ENCODE measurements at regions of chr1 and their contacts with region 1.

Region 1: DNA sequence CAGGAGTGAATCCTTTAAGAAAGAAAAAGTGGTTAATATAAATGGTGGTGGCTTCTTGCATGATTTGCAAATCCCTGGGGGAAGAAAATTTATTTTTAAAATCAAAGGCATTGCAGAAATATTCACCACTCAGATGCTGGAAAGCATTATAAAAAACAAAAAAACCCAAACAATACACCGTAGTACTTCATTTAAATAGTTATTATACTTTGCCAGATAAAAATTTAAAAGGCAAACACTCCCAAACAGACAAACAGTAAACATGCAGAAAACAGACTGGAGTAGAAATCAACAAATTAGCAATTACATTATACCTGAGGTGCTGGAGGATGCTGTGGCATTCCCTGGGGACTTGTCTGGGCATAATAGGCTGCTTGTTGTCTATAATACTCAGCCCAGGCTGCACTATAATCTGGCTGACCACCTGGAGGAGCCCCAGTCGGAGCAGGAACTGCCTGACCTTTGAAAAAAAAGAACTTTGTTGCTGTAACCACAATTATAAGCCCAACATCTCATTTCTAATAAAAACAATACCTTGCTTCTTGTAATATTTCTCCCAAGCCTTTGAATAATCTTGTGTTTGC is 29.9 kb downstream of the FUBP1 start:
- DNase-seq: no peak
- H3K4me3 ChIP-seq: no peak overlapping the region
- H3K27ac ChIP-seq: no peak overlapping the region
- H3K4me1 ChIP-seq: no peaks in the 10 kb centered on the region
- H3K27me3 ChIP-seq: no peaks in the 10 kb centered on the region
- CTCF ChIP-seq: no peak

Region 2: GRCh38 chr1:77333501-77333900 is 615.4 kb before region 1 on chr1:
- CTCF ChIA-PET with region 1: no interaction called
- POLR2A ChIA-PET with region 1: no interaction called
- intact Hi-C with region 1: no loop called
- DNase-seq: no peak
- H3K4me3 ChIP-seq: no peak overlapping the region
- H3K27ac ChIP-seq: no peak overlapping the region
- H3K4me1 ChIP-seq: no peaks in the 10 kb centered on the region
- H3K27me3 ChIP-seq: no peaks in the 10 kb centered on the region
- CTCF ChIP-seq: no peak

Region 3: GRCh38 chr1:77900687-77901293 is 48.1 kb before region 1 on chr1:
- CTCF ChIA-PET with region 1: no interaction called
- POLR2A ChIA-PET with region 1: no interaction called
- intact Hi-C with region 1: no loop called
- DNase-seq: peak; percentile 19 to 60
- H3K4me3 ChIP-seq: no peak overlapping the region
- H3K27ac ChIP-seq: no peak overlapping the region
- H3K4me1 ChIP-seq: no peaks in the 10 kb centered on the region; the same call in 1 of the 2 replicates
- H3K27me3 ChIP-seq: no peaks in the 10 kb centered on the region
- CTCF ChIP-seq: peak; percentile 89

Region 4: DNA sequence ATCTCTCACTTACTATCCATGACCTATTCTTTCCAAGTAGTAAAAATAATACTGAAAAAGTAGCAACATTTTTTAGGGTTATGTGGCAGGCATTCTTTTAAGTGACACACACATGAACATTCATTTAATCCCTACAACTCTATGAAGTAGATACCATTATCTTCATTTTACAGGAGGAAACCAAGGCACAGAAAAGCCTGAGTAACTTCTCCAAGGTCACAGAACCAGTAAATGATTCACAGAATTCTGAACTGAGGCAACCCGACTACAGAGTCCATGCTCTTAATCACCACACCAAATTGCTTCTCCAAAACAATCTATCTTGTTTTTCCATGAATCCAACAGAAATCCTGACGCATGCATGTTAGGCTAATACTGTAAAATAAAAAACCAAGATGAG is 12.5 kb after region 1 on chr1:
- CTCF ChIA-PET with region 1: no interaction called
- POLR2A ChIA-PET with region 1: no interaction called
- intact Hi-C with region 1: loop called (anchors 1 kb)
- DNase-seq: no peak
- H3K4me3 ChIP-seq: no peak overlapping the region
- H3K27ac ChIP-seq: no peak overlapping the region
- H3K4me1 ChIP-seq: no peaks in the 10 kb centered on the region
- H3K27me3 ChIP-seq: no peaks in the 10 kb centered on the region
- CTCF ChIP-seq: no peak

Region 5: GRCh38 chr1:78114034-78114956 is 165.4 kb after region 1 on chr1:
- CTCF ChIA-PET with region 1: no interaction called
- POLR2A ChIA-PET with region 1: no interaction called
- intact Hi-C with region 1: loop called (anchors 5 kb)
- DNase-seq: peak; percentile 64 to 72
- H3K4me3 ChIP-seq: no peak overlapping the region
- H3K27ac ChIP-seq: no peak overlapping the region
- H3K4me1 ChIP-seq: no peaks in the 10 kb centered on the region
- H3K27me3 ChIP-seq: no peaks in the 10 kb centered on the region
- CTCF ChIP-seq: peak; percentile 92

Measured in PC-9 (cell line).